ENCODE measurements at regions of chr16 and their contacts with region 1.

Region 1: DNA sequence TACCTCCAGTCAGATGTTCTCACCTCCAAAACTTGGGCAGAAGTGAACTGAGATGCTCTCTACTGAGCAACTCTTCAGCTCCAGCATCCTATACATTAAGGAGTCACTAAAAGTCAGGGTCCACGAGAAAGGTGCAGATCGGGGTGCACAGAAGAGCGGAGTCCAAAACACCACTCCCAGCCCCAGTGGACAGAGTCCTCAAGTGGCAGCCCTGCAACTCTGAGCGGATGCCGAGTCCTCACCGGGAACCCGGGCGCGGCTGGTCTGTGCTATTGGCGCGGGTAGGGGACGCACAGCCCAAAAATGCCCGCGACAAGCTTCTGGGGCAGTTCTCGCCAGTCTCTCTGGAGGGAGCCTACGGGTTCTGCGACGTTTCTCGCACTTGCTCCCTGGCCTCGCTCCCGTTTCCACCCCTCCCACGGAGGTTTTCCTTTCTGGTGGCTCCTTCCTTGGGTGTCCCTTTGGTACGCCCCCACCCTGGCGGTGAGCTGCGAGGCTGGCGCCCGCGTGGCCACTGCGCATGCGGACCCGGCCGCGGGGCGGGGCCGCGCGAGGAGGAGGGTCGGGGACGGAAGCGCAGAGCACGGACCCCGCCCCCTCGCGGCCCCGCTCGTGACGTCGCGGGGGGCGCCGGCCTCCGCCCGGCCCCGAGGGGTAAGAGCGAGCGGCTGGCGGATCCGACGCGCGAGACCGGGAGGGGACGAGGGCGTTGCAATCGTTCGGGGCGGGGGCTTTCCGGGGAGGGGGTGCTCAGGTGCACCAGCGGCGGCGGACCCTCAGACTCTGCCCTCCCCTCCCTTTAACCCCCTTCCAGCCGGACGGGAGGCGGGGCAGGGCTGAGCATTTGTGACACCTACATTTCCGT is at the start of gene TMEM219:
- DNase-seq: peak; percentile 99
- H3K4me3 ChIP-seq: peak within 1 kb of the TSS; percentile 66 to 78
- H3K27ac ChIP-seq: peak within 1 kb of the TSS; percentile 69 to 88
- H3K4me1 ChIP-seq: peaks cover 0 to 15% of the 10 kb centered on the region in 2 experiments; a peak in 1 of 4 replicates
- H3K27me3 ChIP-seq: no peaks in the 10 kb centered on the region
- CTCF ChIP-seq: peak; percentile 43
- EP300 ChIP-seq: peak in 1 of 2 experiments; percentile 26; a peak in 1 of 4 replicates
- RAD21 ChIP-seq: no peak
- polyA plus RNA-seq, gene TMEM219: 95.0 and 101 TPM in 2 replicates

Region 2: GRCh38 chr16:29926005-29926710 is 35.6 kb before region 1 on chr16 and contains the start of gene KCTD13:
- CTCF ChIA-PET with region 1: interaction called, 5 read pairs
- POLR2A ChIA-PET with region 1: interaction called, 10 read pairs
- DNase-seq: peak; percentile 99
- H3K4me3 ChIP-seq: peak within 1 kb of the TSS; percentile 73 to 76
- H3K27ac ChIP-seq: peak within 1 kb of the TSS; percentile 81 to 87
- H3K4me1 ChIP-seq: peaks cover 15% of the 10 kb centered on the region in 2 experiments; a peak in 3 of 4 replicates
- H3K27me3 ChIP-seq: no peaks in the 10 kb centered on the region
- CTCF ChIP-seq: no peak
- EP300 ChIP-seq: no peak; a peak in 1 of 4 replicates
- RAD21 ChIP-seq: no peak; the same call in 1 of the 2 replicates
- polyA plus RNA-seq, gene KCTD13: 28.5 and 31.0 TPM in 2 replicates

Region 3: GRCh38 chr16:30052671-30053372 is 91.1 kb after region 1 on chr16:
- CTCF ChIA-PET with region 1: no interaction called
- POLR2A ChIA-PET with region 1: no interaction called
- DNase-seq: peak; percentile 97
- H3K4me3 ChIP-seq: peak overlapping the region; percentile 68 to 97
- H3K27ac ChIP-seq: peak overlapping the region; percentile 58 to 70; a peak in 3 of 4 replicates
- H3K4me1 ChIP-seq: peaks cover 5% of the 10 kb centered on the region in 2 experiments; a peak in 2 of 4 replicates
- H3K27me3 ChIP-seq: no peaks in the 10 kb centered on the region
- CTCF ChIP-seq: no peak
- EP300 ChIP-seq: peak; percentile 26 to 33; a peak in 2 of 4 replicates
- RAD21 ChIP-seq: no peak